ENCODE measurements at regions of chr11 and their contacts with region 1.

Region 1: DNA sequence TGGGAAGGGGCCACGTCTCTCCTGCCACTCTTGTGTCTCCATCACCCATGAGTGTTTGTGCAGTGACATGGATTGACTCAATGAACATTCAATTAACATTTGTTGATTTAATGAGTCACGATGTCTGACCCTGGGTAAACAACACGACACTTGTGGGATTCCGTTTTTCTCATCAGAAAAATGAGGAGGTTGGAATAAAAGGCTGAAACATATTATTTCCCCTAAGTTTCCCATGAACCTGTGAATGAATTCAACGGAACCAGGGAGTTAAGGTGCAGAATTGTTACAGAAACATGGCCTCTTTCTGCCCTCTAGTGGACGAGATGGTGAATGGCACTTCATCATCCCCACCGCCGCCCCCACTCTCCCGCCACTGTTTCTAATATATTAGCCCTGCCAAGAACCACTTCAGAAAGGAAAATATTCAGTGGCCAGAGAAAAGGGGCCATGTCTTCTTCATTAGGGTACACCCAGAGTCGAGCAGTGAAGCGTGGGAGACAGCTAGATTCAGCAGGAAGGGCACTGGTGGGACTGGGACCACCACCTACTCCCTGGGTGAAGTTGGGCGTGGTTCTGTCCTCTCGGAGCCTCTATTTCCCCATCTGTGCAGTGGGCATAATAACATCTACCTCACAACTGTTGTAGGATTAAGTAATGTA is 46.3 kb upstream of the SYT13 start:
- DNase-seq: peak; percentile 79
- H3K27ac ChIP-seq: no peak overlapping the region
- CTCF ChIP-seq: peak; percentile 79

Region 2: DNA sequence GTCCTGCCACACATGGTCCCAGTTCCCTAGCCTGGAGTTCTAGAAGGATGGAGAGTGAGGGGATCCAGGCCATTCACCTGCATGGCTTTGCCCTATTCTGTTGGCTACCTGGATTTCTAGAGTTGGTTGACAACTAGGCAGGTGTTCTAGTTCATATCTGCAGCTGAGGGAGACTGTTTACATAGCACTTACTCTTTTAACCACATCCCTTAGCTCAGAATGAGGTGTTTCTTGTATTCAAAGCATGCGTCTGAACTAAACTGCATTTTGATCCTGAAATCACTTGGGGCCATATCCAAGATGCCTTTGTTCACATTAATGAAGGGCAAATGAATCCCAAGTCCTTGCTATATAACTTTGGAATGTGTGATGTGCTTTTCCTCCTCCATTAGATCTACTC is 107.1 kb before region 1 on chr11:
- CTCF ChIA-PET with region 1: no interaction called
- POLR2A ChIA-PET with region 1: no interaction called
- DNase-seq: no peak
- H3K27ac ChIP-seq: no peak overlapping the region
- CTCF ChIP-seq: no peak

Region 3: DNA sequence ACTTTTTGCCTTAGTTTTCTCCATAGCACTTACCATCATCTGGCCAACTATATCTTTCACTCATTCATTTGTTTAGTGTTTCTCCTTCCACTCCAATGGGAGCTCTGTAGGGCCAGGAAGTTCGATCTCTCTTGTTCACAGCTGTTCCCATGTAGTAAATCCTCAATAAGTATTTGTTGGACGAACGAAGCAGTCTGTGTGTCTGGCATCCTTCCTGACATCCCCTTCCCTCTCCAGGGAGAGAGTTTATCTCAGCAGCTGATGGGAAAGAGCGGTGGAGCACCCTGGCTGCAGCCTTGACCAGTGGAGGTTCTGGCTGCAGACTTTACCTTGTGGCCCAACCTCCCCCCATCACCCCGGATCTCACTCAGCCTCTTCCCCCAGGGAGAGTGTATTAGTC is 191.4 kb after region 1 on chr11:
- CTCF ChIA-PET with region 1: interaction called, 10 read pairs
- POLR2A ChIA-PET with region 1: no interaction called
- DNase-seq: no peak
- H3K27ac ChIP-seq: no peak overlapping the region
- CTCF ChIP-seq: no peak

Region 4: DNA sequence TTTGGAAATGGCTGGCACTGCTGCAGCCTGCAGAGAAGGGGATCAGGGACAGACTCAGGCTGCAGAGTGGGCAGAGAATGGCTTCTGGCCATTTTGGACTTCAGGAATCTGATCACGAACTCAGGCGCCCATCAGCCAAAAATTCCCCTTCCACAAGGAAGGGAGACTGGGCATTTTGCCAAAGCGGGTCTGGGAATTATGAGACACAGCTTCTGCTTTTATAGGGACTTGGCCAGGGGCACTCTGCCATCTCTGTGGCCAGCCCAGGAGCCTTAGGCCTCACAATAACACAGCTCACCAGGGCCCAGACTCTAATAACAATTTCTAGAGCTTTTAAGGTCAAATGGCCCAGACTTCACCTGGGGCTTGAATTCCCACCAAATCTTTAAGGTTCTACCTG is 258.3 kb after region 1 on chr11:
- CTCF ChIA-PET with region 1: no interaction called
- POLR2A ChIA-PET with region 1: no interaction called
- DNase-seq: no peak
- H3K27ac ChIP-seq: no peak overlapping the region
- CTCF ChIP-seq: no peak

Region 5: DNA sequence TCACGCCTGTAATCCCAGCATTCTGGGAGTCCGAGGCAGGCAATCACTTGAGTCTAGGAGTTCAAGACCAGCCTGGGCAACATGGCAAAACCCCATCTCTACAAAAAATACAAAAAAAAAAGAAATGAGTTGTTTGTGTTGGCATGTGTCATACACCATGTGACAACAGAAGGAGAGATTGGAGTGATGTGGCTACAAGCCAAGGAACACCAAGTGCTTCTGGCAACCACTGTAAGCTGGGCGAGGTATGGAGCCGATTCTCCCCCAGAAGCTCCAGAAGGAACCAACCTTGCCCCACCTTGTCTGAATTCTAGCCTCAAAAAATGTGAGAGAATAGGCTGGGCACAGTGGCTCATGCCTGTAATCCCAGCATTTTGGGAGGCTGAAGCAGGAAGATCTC is 433.4 kb after region 1 on chr11:
- CTCF ChIA-PET with region 1: no interaction called
- POLR2A ChIA-PET with region 1: no interaction called
- DNase-seq: no peak
- H3K27ac ChIP-seq: no peak overlapping the region
- CTCF ChIP-seq: no peak

Measured in RWPE1 (cell line).